Activated naive CD4-positive, alpha-beta T cell treated with anti-CD3 and anti-CD28 coated beads for 36 hours (primary cell): ENCODE measurements at regions of chr1 and their contacts with region 1.

Region 1: DNA sequence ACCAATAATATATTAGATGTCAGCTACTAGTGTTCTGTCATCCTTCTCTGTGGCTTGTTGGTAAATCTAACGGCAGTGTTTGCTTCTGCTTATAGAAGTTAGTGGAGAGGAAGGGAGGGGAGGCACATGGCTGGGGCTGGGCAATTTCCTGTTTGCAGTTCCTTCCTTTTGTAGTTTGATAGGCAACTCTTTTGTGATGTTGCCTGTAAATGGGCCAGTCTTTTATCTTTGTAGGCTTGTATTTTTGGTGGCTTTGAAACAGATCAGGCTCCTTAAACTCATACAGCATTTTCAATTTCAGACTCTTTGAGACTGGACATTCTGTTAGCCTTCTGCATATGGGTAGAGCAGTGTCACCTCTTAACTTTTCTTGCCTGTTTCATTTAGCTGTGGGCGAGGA is 48.1 kb downstream of the CDC14A start:
- DNase-seq: peak; percentile 73
- H3K4me3 Mint-ChIP-seq: peak overlapping the region; percentile 60
- H3K27ac Mint-ChIP-seq: peak overlapping the region; percentile 94
- H3K4me1 Mint-ChIP-seq: peaks cover 75% of the 10 kb centered on the region
- H3K27me3 Mint-ChIP-seq: no peaks in the 10 kb centered on the region

Region 2: DNA sequence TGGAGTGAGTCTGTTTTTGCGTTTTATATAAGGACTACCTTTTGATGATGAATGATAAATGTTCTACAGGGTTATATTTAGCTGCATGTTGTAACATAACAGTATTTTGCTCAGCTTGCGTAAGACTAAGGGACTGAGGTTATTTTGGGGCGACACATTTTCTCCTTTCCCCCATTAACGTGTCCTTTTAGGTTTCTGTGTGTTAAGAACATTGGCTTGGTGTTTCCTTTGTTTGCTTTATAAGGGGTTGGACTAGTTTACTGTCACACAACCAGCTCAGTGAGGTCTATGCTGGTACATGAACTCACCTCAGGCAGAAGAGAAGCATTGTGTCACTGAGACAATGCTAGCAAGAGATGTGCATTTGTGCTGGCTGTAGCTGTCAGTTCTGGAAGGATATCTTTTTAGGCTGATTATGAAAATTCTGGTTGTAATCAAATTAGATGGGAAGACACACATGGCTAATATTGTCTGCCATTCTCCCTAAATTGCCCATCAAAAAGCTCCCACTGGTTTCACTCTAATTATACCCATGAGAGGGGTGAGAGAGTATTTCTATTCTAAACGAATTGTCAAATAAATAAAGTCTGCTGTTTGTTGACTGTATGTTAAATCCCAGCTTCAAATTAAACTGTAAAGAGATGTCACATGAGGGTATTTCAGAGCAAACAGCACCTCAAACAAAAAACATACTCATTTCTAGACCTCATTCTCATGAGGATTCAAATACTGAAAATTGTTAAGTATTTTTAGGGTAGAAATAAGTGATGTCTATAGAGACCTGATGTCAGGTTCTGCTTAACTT is 14.5 kb after region 1 on chr1:
- CTCF ChIA-PET with region 1: interaction called, 6 read pairs
- intact Hi-C with region 1: loop called (anchors 1 kb)
- DNase-seq: no peak
- H3K4me3 Mint-ChIP-seq: peak overlapping the region; percentile 3
- H3K27ac Mint-ChIP-seq: peak overlapping the region; percentile 67
- H3K4me1 Mint-ChIP-seq: peaks cover 73% of the 10 kb centered on the region
- H3K27me3 Mint-ChIP-seq: no peaks in the 10 kb centered on the region

Region 3: DNA sequence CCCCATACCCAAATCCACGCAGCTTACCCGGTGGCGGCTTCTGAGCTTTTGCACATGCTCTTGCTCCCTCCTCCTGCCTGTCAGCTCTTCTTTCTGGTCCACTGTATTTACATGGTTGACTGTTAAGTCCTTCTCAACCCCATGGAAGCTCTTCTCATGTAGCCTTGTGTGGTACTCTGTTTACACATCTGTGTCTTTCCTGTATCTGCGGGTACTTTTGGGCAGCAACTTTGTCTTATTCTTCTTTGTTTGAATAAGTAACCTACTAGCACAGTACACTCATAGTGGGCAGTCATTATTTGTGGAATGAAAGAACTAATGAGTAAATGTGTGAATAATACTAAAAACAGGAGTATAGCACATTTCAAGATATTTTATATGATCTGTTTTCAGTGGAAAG is 49.1 kb after region 1 on chr1:
- CTCF ChIA-PET with region 1: interaction called, 7 read pairs
- intact Hi-C with region 1: loop called (anchors 1 kb)
- DNase-seq: peak; percentile 61
- H3K4me3 Mint-ChIP-seq: peak overlapping the region; percentile 9
- H3K27ac Mint-ChIP-seq: peak overlapping the region; percentile 79
- H3K4me1 Mint-ChIP-seq: peaks cover 87% of the 10 kb centered on the region
- H3K27me3 Mint-ChIP-seq: no peaks in the 10 kb centered on the region